ENCODE measurements at regions of chr3 and their contacts with region 1.

Region 1: DNA sequence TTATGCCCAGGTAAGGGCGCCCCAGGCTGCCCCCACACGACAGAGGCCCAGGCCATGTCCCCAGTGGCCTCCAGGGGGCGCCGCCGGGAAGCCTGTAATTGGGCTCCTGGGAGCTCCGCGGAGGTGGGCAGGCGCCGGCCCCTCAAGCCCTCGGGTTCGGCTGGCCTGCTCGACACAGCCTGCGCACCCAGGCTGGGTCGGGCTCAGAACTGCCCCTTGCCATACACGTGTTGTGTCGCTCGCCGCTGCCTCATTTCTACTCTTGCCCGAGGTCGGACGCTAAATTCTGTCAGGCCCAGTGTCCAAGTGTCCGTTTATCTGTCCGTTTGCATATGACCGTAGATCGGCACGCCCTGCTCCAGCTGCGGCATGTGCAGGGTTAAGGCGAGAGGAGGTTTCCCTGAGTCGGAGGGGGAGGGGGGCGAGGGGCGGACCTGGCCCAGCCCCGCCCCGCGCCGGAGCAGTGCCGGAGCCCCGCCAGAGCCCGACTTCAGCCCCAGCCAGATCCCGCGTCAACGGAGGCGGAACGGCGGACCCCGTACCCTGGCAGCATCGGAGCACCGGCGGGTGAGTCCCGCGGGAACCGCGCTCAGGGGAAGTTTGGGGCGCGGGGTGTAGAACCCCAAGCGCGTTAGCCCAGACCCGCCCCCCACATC is at the start of gene KLHDC8B:
- DNase-seq: peak; percentile 87
- ATAC-seq: peak; percentile 90
- H3K4me3 Mint-ChIP-seq: peak within 1 kb of the TSS; percentile 78
- H3K27ac Mint-ChIP-seq: peak within 1 kb of the TSS; percentile 65
- H3K4me1 Mint-ChIP-seq: peaks cover 31% of the 10 kb centered on the region
- H3K27me3 Mint-ChIP-seq: no peaks in the 10 kb centered on the region
- total RNA-seq, gene KLHDC8B: 0.81 to 1.2 TPM

Region 2: GRCh38 chr3:49158108-49158709 is 13.0 kb before region 1 on chr3:
- CTCF ChIA-PET with region 1: interaction called, 13 read pairs
- POLR2A ChIA-PET with region 1: no interaction called
- DNase-seq: peak; percentile 76
- ATAC-seq: peak; percentile 80
- H3K4me3 Mint-ChIP-seq: no peak overlapping the region
- H3K27ac Mint-ChIP-seq: no peak overlapping the region
- H3K4me1 Mint-ChIP-seq: peaks cover 20% of the 10 kb centered on the region
- H3K27me3 Mint-ChIP-seq: no peaks in the 10 kb centered on the region

Region 3: DNA sequence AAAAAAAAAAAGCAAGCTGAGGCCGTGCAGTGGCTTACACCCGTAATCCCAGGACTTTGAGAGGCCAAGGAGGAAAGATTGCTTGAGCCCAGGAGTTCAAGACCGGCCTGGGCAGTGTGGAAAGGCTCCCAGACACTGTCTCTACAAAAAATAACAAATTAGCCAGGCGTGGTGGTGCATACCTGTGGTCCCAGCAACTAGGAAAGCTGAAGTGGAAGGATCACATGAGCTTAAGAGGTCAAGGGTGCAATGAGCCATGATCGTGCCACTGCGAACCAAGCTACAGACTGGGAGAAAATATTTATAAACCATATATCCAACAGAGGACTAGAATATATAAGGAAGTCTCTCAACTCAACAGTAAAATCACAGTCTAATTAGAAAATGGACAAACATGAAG is 10.1 kb after region 1 on chr3:
- CTCF ChIA-PET with region 1: interaction called, 11 read pairs
- POLR2A ChIA-PET with region 1: interaction called, 3 read pairs
- DNase-seq: no peak
- ATAC-seq: no peak
- H3K4me3 Mint-ChIP-seq: no peak overlapping the region
- H3K27ac Mint-ChIP-seq: no peak overlapping the region
- H3K4me1 Mint-ChIP-seq: no peaks in the 10 kb centered on the region
- H3K27me3 Mint-ChIP-seq: peaks cover 2% of the 10 kb centered on the region

Region 4: DNA sequence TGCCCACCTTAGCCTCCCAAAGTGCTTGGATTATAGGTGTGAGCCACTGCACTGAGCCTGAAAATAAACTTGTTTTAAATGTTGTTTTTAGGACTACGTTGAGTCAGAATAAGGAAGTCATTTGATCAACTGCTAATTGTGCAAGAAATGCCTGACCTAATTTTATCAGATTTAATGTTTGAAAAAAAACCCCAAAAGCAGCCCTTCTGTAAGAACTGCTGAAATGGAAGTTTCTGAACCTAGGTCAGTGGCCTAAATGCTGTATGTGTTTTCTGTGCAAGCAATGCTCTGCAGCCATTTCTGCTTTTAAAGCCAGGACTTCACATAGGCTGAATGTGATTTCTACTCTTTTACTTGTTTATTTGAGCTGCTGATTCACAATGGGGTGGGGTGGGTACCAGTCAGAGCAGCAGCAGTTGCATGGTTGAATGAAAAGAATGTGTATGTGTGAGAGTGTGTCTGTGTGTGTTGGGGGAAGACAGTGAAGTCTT is 180.3 kb after region 1 on chr3:
- CTCF ChIA-PET with region 1: no interaction called
- POLR2A ChIA-PET with region 1: no interaction called
- DNase-seq: no peak
- ATAC-seq: no peak
- H3K4me3 Mint-ChIP-seq: no peak overlapping the region
- H3K27ac Mint-ChIP-seq: peak overlapping the region; percentile 3
- H3K4me1 Mint-ChIP-seq: peaks cover 14% of the 10 kb centered on the region
- H3K27me3 Mint-ChIP-seq: no peaks in the 10 kb centered on the region

Region 5: GRCh38 chr3:49445381-49445780 is 274.1 kb after region 1 on chr3:
- CTCF ChIA-PET with region 1: interaction called, 17 read pairs
- POLR2A ChIA-PET with region 1: no interaction called
- DNase-seq: no peak
- ATAC-seq: no peak
- H3K4me3 Mint-ChIP-seq: no peak overlapping the region
- H3K27ac Mint-ChIP-seq: no peak overlapping the region
- H3K4me1 Mint-ChIP-seq: peaks cover 19% of the 10 kb centered on the region
- H3K27me3 Mint-ChIP-seq: no peaks in the 10 kb centered on the region

Region 6: DNA sequence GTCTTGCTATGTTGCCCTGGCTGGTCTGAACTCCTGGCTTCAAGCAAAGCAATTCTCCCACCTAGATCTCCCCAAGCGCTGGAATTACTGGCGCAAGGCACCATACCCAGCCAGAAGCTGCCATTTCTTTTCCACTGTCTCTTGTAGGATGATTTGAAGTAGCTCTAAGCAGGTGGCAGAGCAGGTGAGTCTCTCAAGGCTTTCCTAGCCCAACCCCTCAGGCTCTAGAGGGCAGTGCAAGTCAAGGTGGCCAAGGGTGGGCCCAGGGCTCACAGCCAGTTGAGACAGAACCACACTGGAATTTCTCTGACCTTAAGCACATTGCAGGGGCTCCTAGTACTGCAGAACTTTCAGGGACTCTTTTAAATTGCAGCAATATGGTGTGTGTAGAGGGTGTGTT is 283.2 kb after region 1 on chr3:
- CTCF ChIA-PET with region 1: interaction called, 17 read pairs
- POLR2A ChIA-PET with region 1: no interaction called
- DNase-seq: no peak
- ATAC-seq: no peak
- H3K4me3 Mint-ChIP-seq: no peak overlapping the region
- H3K27ac Mint-ChIP-seq: no peak overlapping the region
- H3K4me1 Mint-ChIP-seq: peaks cover 3% of the 10 kb centered on the region
- H3K27me3 Mint-ChIP-seq: no peaks in the 10 kb centered on the region

Measured in activated CD8-positive, alpha-beta T cell treated with anti-CD3 and anti-CD28 coated beads, Interleukin-2, amount 10 ng/mL, durations not matched to agents 7 days and 5 days (primary cell).